H1 (cell line): ENCODE measurements at regions of chr1 and their contacts with region 1.

Region 1: GRCh38 chr1:62230709-62231108 is 36.1 kb downstream of the L1TD1 start:
- DNase-seq: no peak
- H3K4me3 ChIP-seq: no peak overlapping the region
- H3K27ac ChIP-seq: no peak overlapping the region
- H3K4me1 ChIP-seq: peaks cover 6 to 20% (median 11%) of the 10 kb centered on the region in 4 experiments; a peak in 6 of 7 replicates
- H3K27me3 ChIP-seq: no peaks in the 10 kb centered on the region
- CTCF ChIP-seq: no peak
- EP300 ChIP-seq: no peak
- POLR2A ChIP-seq: peak in 1 of 2 experiments; percentile 30; a peak in 1 of 3 replicates
- RAD21 ChIP-seq: no peak

Region 2: GRCh38 chr1:62093261-62093660 is 137.4 kb before region 1 on chr1:
- CTCF ChIA-PET with region 1: no interaction called
- POLR2A ChIA-PET with region 1: no interaction called
- DNase-seq: no peak
- H3K4me3 ChIP-seq: no peak overlapping the region
- H3K27ac ChIP-seq: no peak overlapping the region
- H3K4me1 ChIP-seq: no peaks in the 10 kb centered on the region
- H3K27me3 ChIP-seq: no peaks in the 10 kb centered on the region
- CTCF ChIP-seq: no peak
- EP300 ChIP-seq: no peak
- POLR2A ChIP-seq: no peak
- RAD21 ChIP-seq: no peak

Region 3: DNA sequence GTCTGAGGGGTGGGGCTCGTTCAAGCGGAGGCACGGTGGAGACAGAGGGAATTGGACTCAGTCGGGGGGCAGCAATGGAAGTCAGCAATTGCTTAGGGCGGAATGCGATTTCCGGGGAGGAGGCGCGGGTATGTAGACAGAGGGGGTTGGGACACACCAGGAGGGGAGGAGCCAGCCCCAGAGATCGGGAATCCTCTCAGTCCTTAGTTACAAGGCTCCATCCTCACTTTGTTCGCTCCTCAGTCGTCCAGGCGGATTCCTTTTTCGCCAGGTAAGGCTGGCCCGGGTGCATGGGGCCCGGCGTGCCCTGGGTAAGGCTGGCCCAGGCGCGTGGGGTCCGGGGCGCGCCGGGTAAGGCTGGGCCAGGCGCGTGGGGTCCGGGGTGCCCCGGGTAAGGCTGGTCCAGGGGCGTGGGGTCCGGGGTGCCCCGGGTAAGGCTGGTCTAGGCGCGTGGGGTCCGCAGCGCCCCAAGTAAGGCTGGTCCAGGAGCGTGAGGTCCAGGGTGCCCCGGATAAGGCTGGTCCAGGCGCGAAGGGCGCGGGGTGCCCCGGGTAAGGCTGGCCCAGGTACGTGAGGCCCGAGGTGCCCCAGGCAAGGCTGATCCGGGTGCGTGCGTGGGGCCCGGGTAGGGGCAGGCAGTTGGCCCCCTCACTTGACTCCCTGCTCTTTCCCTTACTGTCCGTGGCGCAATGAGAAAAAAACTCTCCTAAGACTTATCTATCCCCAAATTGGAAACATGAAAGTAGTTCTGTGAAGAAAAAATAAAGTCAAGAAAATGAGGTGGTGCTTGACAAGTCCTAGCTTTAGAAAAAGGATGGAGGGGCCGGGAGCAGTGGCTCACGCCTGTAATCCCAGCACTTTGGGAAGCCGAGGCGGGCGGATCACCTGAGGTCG is 35.8 kb before region 1 on chr1 and contains the start of gene L1TD1:
- CTCF ChIA-PET with region 1: no interaction called
- POLR2A ChIA-PET with region 1: interaction called, 35 read pairs
- DNase-seq: peak; percentile 88 to 91
- H3K4me3 ChIP-seq: peak within 1 kb of the TSS; percentile 77 to 100 (median 93)
- H3K27ac ChIP-seq: peak within 1 kb of the TSS; percentile 95
- H3K4me1 ChIP-seq: peaks cover 4 to 19% (median 6%) of the 10 kb centered on the region in 4 experiments
- H3K27me3 ChIP-seq: no peaks in the 10 kb centered on the region
- CTCF ChIP-seq: no peak
- EP300 ChIP-seq: no peak; a peak in 1 of 3 replicates
- POLR2A ChIP-seq: peak; percentile 77 to 96
- RAD21 ChIP-seq: no peak
- total RNA-seq, gene L1TD1: 425 and 441 TPM in 2 replicates

Region 4: GRCh38 chr1:62209931-62210595 is 20.6 kb before region 1 on chr1:
- CTCF ChIA-PET with region 1: interaction called, 5 read pairs
- POLR2A ChIA-PET with region 1: interaction called, 98 read pairs
- DNase-seq: no peak
- H3K4me3 ChIP-seq: no peak overlapping the region
- H3K27ac ChIP-seq: no peak overlapping the region
- H3K4me1 ChIP-seq: no peaks in the 10 kb centered on the region; a peak in 1 of 7 replicates
- H3K27me3 ChIP-seq: no peaks in the 10 kb centered on the region
- CTCF ChIP-seq: no peak
- EP300 ChIP-seq: no peak
- POLR2A ChIP-seq: peak; percentile 21 to 38
- RAD21 ChIP-seq: no peak

Region 5: DNA sequence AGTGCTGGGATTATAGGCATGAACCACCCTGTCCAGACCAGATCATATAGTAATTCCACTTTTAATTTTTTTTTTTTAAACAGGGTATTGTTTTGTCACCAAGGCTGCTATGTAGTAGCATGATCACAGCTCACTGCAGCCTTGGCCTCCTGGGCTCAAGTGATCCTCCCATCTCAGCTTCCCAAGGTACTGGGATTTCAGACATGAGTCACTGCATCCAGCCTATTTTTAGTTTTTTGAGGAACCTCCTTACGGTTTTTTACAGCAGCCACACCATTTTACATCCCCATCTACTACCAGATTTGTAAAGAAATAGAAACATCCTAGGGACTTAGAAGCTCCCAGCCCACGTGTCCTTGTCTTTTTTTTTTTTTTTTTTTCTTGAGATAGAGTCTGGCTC is 12.1 kb before region 1 on chr1:
- CTCF ChIA-PET with region 1: interaction called, 3 read pairs
- POLR2A ChIA-PET with region 1: interaction called, 82 read pairs
- DNase-seq: no peak
- H3K4me3 ChIP-seq: no peak overlapping the region
- H3K27ac ChIP-seq: no peak overlapping the region
- H3K4me1 ChIP-seq: no peaks in the 10 kb centered on the region
- H3K27me3 ChIP-seq: no peaks in the 10 kb centered on the region
- CTCF ChIP-seq: no peak
- EP300 ChIP-seq: no peak
- POLR2A ChIP-seq: no peak
- RAD21 ChIP-seq: no peak

Region 6: DNA sequence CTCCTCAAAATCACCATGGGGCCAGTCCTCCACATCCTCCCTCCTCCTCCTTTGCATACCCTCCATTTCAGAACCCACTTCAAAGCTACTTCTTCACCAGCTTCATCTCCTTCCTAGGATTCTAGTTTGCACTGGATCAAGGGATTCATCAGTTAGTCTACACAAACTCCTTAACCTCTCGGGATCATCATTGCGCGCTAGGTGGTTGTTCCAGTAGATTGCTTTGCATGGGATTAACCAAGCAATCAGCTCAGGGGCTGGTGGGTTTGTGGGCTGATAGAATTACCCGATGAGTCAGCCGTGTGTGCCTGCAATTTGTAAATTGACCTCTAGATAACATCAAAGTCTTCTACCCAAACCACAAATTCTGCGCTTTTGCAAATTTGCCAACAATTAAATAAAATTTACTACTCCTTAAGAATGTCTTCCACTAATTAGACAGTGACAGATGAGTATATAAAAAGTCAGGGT is 80.8 kb after region 1 on chr1:
- CTCF ChIA-PET with region 1: no interaction called
- POLR2A ChIA-PET with region 1: no interaction called
- DNase-seq: no peak
- H3K4me3 ChIP-seq: no peak overlapping the region
- H3K27ac ChIP-seq: no peak overlapping the region
- H3K4me1 ChIP-seq: no peaks in the 10 kb centered on the region
- H3K27me3 ChIP-seq: 0 out of 7 replicates have a peak, but pooled peaks cover 0 to 5% (median under 1%) of the 10 kb centered on the region in 4 experiments
- CTCF ChIP-seq: no peak
- EP300 ChIP-seq: no peak
- POLR2A ChIP-seq: no peak
- RAD21 ChIP-seq: no peak